HCT116 (cell line): ENCODE measurements at regions of chr9 and their contacts with region 1.

Region 1: DNA sequence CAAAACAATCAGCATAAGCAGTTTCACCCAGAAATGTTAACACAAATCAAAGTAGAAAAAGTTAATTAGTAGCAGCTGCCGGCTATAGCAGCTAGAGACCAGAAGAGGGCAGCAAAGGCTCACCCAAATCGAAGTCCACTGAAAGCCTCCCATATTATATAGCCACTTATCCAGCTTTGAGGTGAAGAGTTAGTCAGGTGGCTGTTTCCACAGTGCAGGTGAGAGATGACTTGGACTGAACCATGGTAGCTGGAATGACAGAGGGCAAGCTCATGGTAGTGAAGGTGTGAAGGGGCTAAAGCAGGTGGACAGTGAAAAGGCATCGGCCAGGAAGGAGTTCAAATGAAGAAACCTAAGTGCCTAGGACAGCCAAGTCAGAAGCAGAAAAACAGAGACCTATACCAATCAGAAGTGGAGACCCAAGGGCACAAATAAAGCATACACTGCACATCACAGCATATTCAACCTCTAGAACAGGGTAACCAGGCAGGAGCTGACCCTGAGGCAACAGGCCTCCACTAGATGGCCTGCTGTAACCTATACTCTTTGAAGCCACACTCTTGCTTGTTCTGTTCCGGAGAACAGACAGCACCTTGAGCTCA is 7.2 kb upstream of the RNF38 start:
- DNase-seq: peak; percentile 50
- ATAC-seq: peak; percentile 93
- H3K4me3 ChIP-seq: no peak overlapping the region
- H3K27ac ChIP-seq: no peak overlapping the region
- H3K4me1 ChIP-seq: no peaks in the 10 kb centered on the region
- H3K27me3 ChIP-seq: no peaks in the 10 kb centered on the region
- CTCF ChIP-seq: peak; percentile 81 to 95 (median 89)
- POLR2A ChIP-seq: no peak
- RAD21 ChIP-seq: peak; percentile 93

Region 2: GRCh38 chr9:35844716-35845270 is 562.4 kb before region 1 on chr9:
- CTCF ChIA-PET with region 1: no interaction called
- POLR2A ChIA-PET with region 1: no interaction called
- RAD21 ChIA-PET with region 1: no interaction called
- intact Hi-C with region 1: no loop called
- DNase-seq: peak; percentile 26
- ATAC-seq: no peak
- H3K4me3 ChIP-seq: no peak overlapping the region
- H3K27ac ChIP-seq: no peak overlapping the region
- H3K4me1 ChIP-seq: peaks cover 0 to 13% of the 10 kb centered on the region in 2 experiments; a peak in 2 of 4 replicates
- H3K27me3 ChIP-seq: no peaks in the 10 kb centered on the region
- CTCF ChIP-seq: no peak
- POLR2A ChIP-seq: no peak
- RAD21 ChIP-seq: no peak

Region 3: DNA sequence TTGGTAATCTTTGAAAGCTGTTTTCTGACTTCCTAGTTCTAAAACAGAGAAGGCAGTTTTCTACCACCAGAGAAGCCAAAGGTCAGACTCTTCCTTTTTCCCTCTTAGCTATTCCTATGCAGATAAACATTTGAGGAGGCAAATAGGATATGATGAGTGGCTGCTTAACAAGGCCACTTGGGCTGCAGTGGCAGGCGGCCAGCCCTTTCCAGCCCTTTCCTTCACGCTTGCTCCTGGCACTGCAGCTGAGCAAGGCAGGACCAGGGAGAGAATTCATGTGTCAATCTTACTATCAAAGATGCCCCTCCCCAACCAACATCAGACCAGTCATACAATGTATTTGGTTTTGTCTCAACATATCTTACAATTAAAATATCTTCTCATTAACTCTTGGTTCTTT is 29.7 kb after region 1 on chr9:
- CTCF ChIA-PET with region 1: interaction called, 22 read pairs
- POLR2A ChIA-PET with region 1: no interaction called
- RAD21 ChIA-PET with region 1: no interaction called
- intact Hi-C with region 1: no loop called
- DNase-seq: no peak
- ATAC-seq: no peak
- H3K4me3 ChIP-seq: no peak overlapping the region
- H3K27ac ChIP-seq: no peak overlapping the region
- H3K4me1 ChIP-seq: no peaks in the 10 kb centered on the region
- H3K27me3 ChIP-seq: no peaks in the 10 kb centered on the region
- CTCF ChIP-seq: no peak
- POLR2A ChIP-seq: no peak
- RAD21 ChIP-seq: no peak

Region 4: DNA sequence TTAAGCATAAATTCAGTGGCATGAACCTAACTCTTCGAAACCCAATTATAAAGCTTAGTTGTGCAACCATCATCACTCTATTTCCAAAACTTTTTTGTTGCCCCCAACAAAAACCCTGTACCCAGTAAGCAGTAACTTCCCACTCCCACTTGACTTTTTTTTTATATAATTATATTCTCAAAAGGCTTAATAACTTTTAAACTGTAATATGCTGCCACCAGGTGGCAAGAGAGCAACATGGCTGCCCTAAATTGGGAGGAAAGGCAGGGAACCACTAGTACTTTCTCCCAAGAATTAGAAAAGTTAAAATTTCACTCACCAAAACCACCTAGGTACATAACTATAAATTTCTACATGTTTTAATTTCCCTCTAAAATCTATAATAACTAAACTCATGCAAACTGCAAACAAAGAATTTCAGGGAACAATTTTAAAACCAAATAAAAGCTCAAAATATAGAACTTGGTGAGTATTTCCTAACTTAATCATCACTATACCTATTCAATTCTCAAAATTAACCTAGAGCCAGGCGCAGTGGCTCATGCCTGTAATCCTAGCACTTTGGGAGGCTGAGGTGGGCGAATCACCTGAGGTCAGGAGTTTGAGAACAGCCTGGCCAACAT is 43.0 kb after region 1 on chr9:
- CTCF ChIA-PET with region 1: interaction called, 119 read pairs
- POLR2A ChIA-PET with region 1: interaction called, 7 read pairs
- RAD21 ChIA-PET with region 1: interaction called, 11 to 13 read pairs
- intact Hi-C with region 1: loop called (anchors 1 kb)
- DNase-seq: peak; percentile 22
- ATAC-seq: 0 out of 2 replicates have a peak, but pooled peaks have one; percentile 49
- H3K4me3 ChIP-seq: no peak overlapping the region
- H3K27ac ChIP-seq: no peak overlapping the region
- H3K4me1 ChIP-seq: no peaks in the 10 kb centered on the region
- H3K27me3 ChIP-seq: no peaks in the 10 kb centered on the region
- CTCF ChIP-seq: peak; percentile 67 to 86 (median 69)
- POLR2A ChIP-seq: no peak
- RAD21 ChIP-seq: peak; percentile 81

Region 5: GRCh38 chr9:36560857-36561221 is 153.6 kb after region 1 on chr9:
- CTCF ChIA-PET with region 1: interaction called, 49 read pairs
- POLR2A ChIA-PET with region 1: interaction called, 8 read pairs
- RAD21 ChIA-PET with region 1: interaction called, 3 to 10 read pairs
- intact Hi-C with region 1: loop called (anchors 1 kb)
- DNase-seq: no peak
- ATAC-seq: no peak
- H3K4me3 ChIP-seq: no peak overlapping the region
- H3K27ac ChIP-seq: no peak overlapping the region
- H3K4me1 ChIP-seq: peaks cover 0 to under 1% of the 10 kb centered on the region in 2 experiments; a peak in 1 of 4 replicates
- H3K27me3 ChIP-seq: no peaks in the 10 kb centered on the region
- CTCF ChIP-seq: no peak
- POLR2A ChIP-seq: no peak
- RAD21 ChIP-seq: no peak

Region 6: DNA sequence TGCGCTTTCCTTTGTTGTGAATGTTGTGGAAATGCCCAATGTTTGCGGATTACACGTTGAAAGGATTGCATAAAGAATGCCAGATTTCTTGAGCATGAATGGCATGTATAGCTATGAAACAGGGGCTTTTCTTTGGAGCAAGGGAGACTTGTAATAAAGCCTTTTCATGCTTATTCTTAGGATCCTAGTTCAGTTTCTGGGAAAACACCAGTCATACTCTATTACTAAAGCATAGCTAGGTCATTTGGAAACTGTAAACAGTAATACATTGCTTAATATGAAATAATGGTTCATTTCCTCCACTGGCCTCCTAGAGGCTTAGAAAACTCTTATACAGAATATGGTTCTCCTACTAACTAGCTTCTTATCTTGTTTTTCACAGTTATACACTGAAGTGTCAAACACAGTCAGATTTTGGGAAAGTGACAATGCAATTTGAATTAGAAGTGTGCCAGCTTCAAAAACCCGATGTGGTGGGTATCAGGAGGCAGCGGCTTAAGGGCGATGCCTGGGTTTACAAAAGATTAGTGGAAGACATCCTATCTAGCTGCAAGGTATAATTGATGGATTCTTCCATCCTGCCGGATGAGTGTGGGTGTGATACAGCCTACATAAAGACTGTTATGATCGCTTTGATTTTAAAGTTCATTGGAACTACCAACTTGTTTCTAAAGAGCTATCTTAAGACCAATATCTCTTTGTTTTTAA is 269.7 kb after region 1 on chr9:
- CTCF ChIA-PET with region 1: no interaction called
- POLR2A ChIA-PET with region 1: no interaction called
- RAD21 ChIA-PET with region 1: no interaction called
- intact Hi-C with region 1: no loop called
- DNase-seq: no peak
- ATAC-seq: no peak
- H3K4me3 ChIP-seq: no peak overlapping the region
- H3K27ac ChIP-seq: no peak overlapping the region
- H3K4me1 ChIP-seq: no peaks in the 10 kb centered on the region
- H3K27me3 ChIP-seq: no peaks in the 10 kb centered on the region
- CTCF ChIP-seq: no peak
- POLR2A ChIP-seq: no peak
- RAD21 ChIP-seq: no peak

Region 7: DNA sequence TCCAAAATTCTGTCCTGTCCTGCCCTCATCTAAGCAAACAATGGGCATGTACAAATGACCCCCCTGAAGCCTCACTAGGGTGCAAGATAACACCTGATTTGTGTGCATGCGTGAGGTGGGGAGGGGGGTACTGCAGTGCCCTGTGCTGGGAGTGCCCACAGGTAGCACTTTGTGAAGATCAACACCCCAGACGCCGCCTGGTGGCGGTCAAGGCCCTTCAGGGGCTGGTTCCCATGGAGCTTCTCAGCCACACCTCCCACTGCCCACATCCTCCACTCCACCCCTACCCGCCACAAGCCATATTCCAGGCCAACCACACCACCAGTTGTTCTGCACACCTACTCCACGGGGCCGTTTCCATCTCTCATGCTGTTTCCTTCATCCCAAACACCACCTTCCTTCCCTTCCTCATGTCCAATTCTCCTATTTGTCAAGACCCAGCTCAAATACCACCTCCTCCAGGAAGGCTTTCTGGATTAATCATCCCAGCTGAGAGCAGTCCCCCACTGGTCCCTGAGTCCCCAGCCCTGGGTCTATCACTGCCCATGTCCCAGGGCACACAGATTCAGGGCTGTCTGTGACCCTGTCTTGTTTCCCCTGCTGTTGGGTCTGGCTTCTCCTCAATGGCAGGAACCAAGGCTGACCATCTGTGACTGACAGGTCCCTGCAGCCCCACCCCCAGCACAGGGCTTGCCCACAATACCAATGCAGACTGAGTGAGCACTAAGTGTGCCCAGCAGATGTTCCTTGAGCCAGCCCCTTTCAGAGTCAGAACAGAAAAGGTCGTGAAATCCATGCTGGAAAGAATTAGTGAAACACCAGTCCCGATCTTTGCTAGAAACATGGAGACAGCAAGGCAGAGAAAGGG is 448.5 kb after region 1 on chr9:
- CTCF ChIA-PET with region 1: interaction called, 16 read pairs
- POLR2A ChIA-PET with region 1: no interaction called
- RAD21 ChIA-PET with region 1: interaction called, 3 read pairs
- intact Hi-C with region 1: loop called (anchors 5 kb)
- DNase-seq: peak; percentile 61
- ATAC-seq: peak; percentile 100
- H3K4me3 ChIP-seq: no peak overlapping the region
- H3K27ac ChIP-seq: no peak overlapping the region
- H3K4me1 ChIP-seq: peaks cover 0 to 9% of the 10 kb centered on the region in 2 experiments; a peak in 1 of 4 replicates
- H3K27me3 ChIP-seq: no peaks in the 10 kb centered on the region; the same call in 1 of the 2 replicates
- CTCF ChIP-seq: peak; percentile 43 to 72 (median 69); a peak in 4 of 6 replicates
- POLR2A ChIP-seq: no peak
- RAD21 ChIP-seq: peak; percentile 62